Activated B cell treated with CpG ODN at 0.5 μM for 24 hours (primary cell): ENCODE measurements at regions of chr16 and their contacts with region 1.

Region 1: DNA sequence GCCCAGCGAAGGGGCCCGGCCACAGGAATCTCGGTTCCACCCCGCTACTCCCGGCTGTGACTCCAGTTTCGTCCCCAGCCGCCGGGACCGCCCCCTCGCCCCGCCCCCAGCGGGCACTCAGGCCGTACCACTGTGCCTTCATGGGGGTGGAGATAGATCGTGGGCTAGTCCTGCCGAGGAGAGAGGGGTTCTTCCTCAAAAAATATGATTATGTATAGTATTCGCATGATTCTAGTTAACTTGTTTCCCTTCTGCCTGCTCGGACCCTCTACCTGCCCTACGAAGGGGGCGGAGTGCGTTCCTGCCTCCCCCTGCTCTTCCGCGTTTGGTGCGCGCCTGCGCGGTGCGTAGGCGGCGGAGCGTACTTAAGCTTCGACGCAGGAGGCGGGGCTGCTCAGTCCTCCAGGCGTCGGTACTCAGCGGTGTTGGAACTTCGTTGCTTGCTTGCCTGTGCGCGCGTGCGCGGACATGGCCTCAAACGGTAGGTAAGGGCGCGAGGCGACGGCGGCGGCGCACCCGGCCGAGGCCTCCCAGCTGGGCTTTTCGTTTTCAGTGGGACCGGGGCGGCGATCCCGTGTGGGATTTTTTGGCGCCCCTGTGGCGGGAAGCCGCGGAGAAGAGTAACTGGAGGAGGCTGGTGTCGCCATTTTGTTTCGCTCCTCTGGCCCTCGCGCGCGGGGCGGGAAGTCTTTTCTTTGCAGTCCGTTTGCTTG is at the start of gene FUS:
- DNase-seq: peak; percentile 91
- ATAC-seq: peak; percentile 69
- H3K4me3 Mint-ChIP-seq: peak within 1 kb of the TSS; percentile 96
- H3K27ac Mint-ChIP-seq: peak within 1 kb of the TSS; percentile 100
- H3K4me1 Mint-ChIP-seq: peaks cover 57% of the 10 kb centered on the region
- H3K27me3 Mint-ChIP-seq: no peaks in the 10 kb centered on the region
- CTCF ChIP-seq: no peak
- total RNA-seq, gene FUS: 681 and 752 TPM in 2 replicates

Region 2: DNA sequence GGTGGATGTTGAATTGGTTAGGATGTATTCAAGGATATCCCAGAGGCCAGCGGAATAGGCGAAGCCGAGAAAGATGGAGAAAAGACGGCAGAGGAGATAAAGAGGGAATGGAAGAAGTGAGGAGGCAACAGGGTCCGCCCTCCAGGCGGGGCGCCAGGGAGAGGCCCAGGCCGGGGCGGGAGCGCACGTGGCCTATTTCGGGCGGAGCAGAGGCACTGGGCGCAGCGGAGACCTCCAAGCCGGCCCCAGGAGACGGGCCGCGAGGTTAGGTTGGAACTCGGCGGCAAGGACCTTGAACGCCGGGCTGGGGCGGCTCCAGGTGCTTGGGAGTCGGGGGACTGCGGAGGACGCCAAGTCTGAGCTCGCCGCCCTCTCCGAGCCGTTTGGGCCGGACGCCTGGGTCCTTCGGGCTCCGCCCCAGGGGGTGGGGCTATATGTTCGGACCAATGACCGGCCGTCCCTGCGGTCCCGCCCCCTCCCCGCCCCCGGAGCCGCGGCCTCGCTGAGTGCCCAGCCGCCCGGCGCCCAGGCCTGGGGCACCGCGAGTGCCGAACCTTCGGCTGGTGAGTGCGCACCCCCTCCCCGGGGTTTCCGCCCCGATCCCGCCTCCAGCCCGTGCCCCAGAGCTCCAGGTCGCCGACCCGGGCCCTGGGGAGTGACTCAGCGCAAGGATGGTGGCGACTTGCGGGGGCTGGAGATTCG is 772.6 kb before region 1 on chr16 and contains the start of gene ZNF771:
- CTCF ChIA-PET with region 1: no interaction called
- POLR2A ChIA-PET with region 1: interaction called, 16 read pairs
- intact Hi-C with region 1: no loop called
- DNase-seq: peak; percentile 90
- ATAC-seq: peak; percentile 89
- H3K4me3 Mint-ChIP-seq: peak within 1 kb of the TSS; percentile 89
- H3K27ac Mint-ChIP-seq: peak within 1 kb of the TSS; percentile 90
- H3K4me1 Mint-ChIP-seq: peaks cover 27% of the 10 kb centered on the region
- H3K27me3 Mint-ChIP-seq: no peaks in the 10 kb centered on the region
- CTCF ChIP-seq: no peak
- total RNA-seq, gene ZNF771: 4.4 and 5.2 TPM in 2 replicates

Region 3: GRCh38 chr16:30758988-30759521 is 420.8 kb before region 1 on chr16:
- CTCF ChIA-PET with region 1: no interaction called
- POLR2A ChIA-PET with region 1: no interaction called
- intact Hi-C with region 1: no loop called
- DNase-seq: no peak
- ATAC-seq: no peak
- H3K4me3 Mint-ChIP-seq: no peak overlapping the region
- H3K27ac Mint-ChIP-seq: peak overlapping the region; percentile 76
- H3K4me1 Mint-ChIP-seq: peaks cover 39% of the 10 kb centered on the region
- H3K27me3 Mint-ChIP-seq: no peaks in the 10 kb centered on the region
- CTCF ChIP-seq: no peak

Region 4: DNA sequence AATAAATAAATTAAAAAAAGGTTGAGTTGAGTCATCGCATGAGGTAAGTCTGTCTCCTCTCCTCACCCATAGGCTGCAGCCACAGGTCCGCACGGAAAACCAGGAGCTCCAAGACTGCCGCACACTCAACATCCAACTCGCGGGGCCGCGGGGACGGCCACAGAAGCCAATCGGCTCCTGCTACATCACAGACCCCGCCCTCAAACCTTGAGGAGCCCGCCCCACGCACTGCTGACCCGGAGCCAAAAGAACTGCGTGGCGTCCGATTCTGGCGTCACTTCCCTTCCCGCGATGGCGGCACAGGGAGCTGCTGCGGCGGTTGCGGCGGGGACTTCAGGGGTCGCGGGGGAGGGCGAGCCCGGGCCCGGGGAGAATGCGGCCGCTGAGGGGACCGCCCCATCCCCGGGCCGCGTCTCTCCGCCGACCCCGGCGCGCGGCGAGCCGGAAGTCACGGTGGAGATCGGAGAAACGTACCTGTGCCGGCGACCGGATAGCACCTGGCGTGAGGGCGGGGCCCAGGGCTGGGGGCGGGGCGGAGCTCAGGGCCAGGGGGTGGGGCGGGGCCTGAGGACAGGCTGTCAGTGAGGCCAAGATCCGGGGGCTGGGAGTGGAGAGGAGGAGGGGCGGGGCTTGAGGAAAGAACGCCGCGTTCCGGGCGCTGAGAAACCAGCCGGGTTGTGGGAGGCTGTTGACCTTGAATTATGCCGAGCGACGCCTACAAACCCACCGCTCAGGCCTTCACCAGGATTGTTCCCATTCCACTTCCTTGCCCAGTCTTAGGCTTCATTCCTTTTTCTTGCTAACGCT is 62.3 kb before region 1 on chr16 and contains the start of gene KAT8:
- CTCF ChIA-PET with region 1: no interaction called
- POLR2A ChIA-PET with region 1: interaction called, 47 read pairs
- intact Hi-C with region 1: loop called (anchors 5 kb)
- DNase-seq: peak; percentile 92
- ATAC-seq: peak; percentile 94
- H3K4me3 Mint-ChIP-seq: peak within 1 kb of the TSS; percentile 85
- H3K27ac Mint-ChIP-seq: peak within 1 kb of the TSS; percentile 85
- H3K4me1 Mint-ChIP-seq: peaks cover 22% of the 10 kb centered on the region
- H3K27me3 Mint-ChIP-seq: no peaks in the 10 kb centered on the region
- CTCF ChIP-seq: no peak
- total RNA-seq, gene KAT8: 82.1 and 93.7 TPM in 2 replicates

Region 5: DNA sequence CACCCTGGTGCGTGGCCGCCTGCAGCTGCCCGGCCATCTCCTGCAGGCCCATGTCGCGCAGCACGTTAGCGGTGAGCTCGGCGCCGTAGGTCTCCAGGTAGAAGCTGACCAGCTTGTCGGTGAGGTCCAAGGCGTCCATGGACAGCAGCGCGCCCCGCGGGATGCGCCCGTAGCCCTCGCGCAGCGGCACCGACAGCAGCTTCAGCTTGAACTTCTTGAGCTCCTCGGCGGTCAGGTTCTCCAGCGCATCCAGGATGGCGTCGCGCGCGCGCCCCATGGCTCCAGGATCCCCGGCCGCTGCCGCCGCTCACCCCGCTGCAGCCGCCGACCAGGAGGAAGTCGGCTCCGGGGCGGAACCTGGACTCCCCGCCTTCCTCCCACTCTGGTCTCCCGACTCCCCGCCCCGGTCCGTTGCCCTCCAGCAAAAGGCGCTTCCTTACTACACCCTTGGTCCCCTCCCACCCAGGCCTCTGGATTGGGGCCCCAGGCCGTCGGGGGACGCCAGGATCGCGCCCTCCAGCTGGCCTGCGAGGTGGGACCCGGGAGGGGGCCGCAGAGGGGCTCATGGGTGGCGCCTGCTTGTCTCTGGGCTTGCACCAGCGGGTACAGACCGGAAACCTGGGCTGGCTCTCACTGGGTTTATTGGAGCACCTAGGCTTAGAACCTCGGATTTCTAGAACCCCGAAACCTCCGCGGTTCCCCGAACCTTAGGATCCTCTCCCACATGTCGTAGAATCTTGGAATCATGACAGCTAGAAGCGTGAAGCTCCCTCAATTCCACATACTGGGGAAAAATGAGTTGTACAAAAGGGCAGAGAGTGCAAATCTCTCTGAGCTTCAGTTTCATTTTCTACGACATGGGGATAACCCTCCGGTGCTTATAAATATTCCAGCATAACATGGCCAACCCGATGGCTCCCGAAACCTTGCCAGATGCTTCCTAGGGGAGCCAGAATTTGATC is 22.8 kb after region 1 on chr16 and contains the start of gene PYCARD:
- CTCF ChIA-PET with region 1: no interaction called
- POLR2A ChIA-PET with region 1: interaction called, 146 read pairs
- intact Hi-C with region 1: loop called (anchors 1 kb)
- DNase-seq: peak; percentile 61
- ATAC-seq: peak; percentile 32
- H3K4me3 Mint-ChIP-seq: peak within 1 kb of the TSS; percentile 91
- H3K27ac Mint-ChIP-seq: peak within 1 kb of the TSS; percentile 86
- H3K4me1 Mint-ChIP-seq: peaks cover 56% of the 10 kb centered on the region
- H3K27me3 Mint-ChIP-seq: no peaks in the 10 kb centered on the region
- CTCF ChIP-seq: no peak
- total RNA-seq, gene PYCARD: 21.7 and 27.8 TPM in 2 replicates

Region 6: GRCh38 chr16:31265329-31266245 is 85.7 kb after region 1 on chr16:
- CTCF ChIA-PET with region 1: no interaction called
- POLR2A ChIA-PET with region 1: interaction called, 19 read pairs
- intact Hi-C with region 1: no loop called
- DNase-seq: peak; percentile 68
- ATAC-seq: peak; percentile 93
- H3K4me3 Mint-ChIP-seq: peak overlapping the region; percentile 72
- H3K27ac Mint-ChIP-seq: peak overlapping the region; percentile 85
- H3K4me1 Mint-ChIP-seq: peaks cover 76% of the 10 kb centered on the region
- H3K27me3 Mint-ChIP-seq: no peaks in the 10 kb centered on the region
- CTCF ChIP-seq: no peak

Region 7: DNA sequence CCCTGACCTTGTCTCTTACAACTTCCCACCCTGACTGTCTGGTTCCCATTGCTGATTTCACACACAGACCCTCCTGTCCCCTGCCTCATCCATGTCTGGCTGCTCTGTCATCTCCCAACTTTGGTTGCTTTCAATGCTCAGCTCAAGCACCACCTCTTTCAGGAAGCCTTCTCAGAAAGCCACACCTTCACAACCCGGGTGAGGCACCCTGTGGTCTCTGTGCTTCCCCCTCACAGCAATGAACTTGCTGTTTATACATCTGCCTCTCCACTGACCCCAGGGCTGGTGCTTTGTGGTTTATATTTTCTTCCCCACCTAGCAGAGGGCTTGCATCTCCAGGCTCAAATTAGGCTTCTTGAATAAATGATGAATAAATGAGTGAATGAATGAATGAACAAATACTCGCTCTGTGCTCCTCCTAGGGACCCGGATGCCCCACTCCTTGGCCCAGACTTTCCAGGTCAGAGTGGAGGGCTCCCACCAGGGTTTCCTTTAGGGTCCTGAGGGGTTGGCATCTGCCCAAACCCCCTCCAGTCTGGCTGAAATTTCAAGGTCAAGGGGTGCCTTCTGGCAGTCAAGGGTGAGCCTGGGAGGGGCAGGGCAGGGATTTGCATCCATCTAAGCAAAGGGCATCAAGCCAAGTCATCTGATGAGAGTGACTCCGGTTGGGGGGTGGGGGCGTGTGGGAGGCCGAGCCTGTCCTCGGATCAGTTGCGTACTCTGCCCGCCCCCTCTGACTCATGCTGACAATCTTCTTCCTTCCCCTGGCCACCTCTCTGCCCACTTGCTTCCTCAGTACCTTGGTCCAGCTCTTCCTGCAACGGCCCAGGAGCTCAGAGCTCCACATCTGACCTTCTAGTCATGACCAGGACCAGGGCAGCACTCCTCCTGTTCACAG is 174.7 kb after region 1 on chr16 and contains the start of gene ITGAX:
- CTCF ChIA-PET with region 1: no interaction called
- POLR2A ChIA-PET with region 1: interaction called, 38 read pairs
- intact Hi-C with region 1: loop called (anchors 1 kb)
- DNase-seq: peak; percentile 42
- ATAC-seq: peak; percentile 72
- H3K4me3 Mint-ChIP-seq: peak within 1 kb of the TSS; percentile 78
- H3K27ac Mint-ChIP-seq: peak within 1 kb of the TSS; percentile 93
- H3K4me1 Mint-ChIP-seq: peaks cover 74% of the 10 kb centered on the region
- H3K27me3 Mint-ChIP-seq: no peaks in the 10 kb centered on the region
- CTCF ChIP-seq: no peak
- total RNA-seq, gene ITGAX: 81.9 and 100 TPM in 2 replicates